ENCODE measurements at regions of chr14 and their contacts with region 1.

Region 1: GRCh38 chr14:54411371-54411770 is 14.6 kb downstream of the CDKN3 start:
- DNase-seq: no peak
- H3K4me3 ChIP-seq: no peak overlapping the region
- CTCF ChIP-seq: no peak

Region 2: GRCh38 chr14:54396493-54397335 is 14.7 kb before region 1 on chr14 and contains the start of gene CDKN3:
- CTCF ChIA-PET with region 1: interaction called, 31 read pairs
- POLR2A ChIA-PET with region 1: no interaction called
- DNase-seq: peak; percentile 96
- H3K4me3 ChIP-seq: peak within 1 kb of the TSS; percentile 85
- CTCF ChIP-seq: peak; percentile 60

Region 3: GRCh38 chr14:54462048-54462447 is 50.7 kb after region 1 on chr14:
- CTCF ChIA-PET with region 1: no interaction called
- POLR2A ChIA-PET with region 1: no interaction called
- DNase-seq: no peak
- H3K4me3 ChIP-seq: no peak overlapping the region
- CTCF ChIP-seq: no peak

Measured in AG04449 (cell line).